ENCODE measurements at regions of chr5 and their contacts with region 1.

Region 1: GRCh38 chr5:56270568-56271392 is 37.6 kb upstream of the ANKRD55 start:
- DNase-seq: peak; percentile 89 to 92
- H3K4me3 ChIP-seq: no peak overlapping the region
- H3K4me3 Mint-ChIP-seq: no peak overlapping the region
- H3K27ac Mint-ChIP-seq: peak overlapping the region; percentile 74
- H3K4me1 ChIP-seq: peaks cover 25% of the 10 kb centered on the region
- H3K4me1 Mint-ChIP-seq: peaks cover 29% of the 10 kb centered on the region
- H3K27me3 ChIP-seq: no peaks in the 10 kb centered on the region
- H3K27me3 Mint-ChIP-seq: no peaks in the 10 kb centered on the region
- CTCF ChIP-seq: peak; percentile 99

Region 2: GRCh38 chr5:56200856-56201666 is 69.7 kb before region 1 on chr5:
- CTCF ChIA-PET with region 1: interaction called, 3 read pairs
- POLR2A ChIA-PET with region 1: no interaction called
- intact Hi-C with region 1: loop called (anchors 2 kb)
- DNase-seq: peak; percentile 84 to 85
- H3K4me3 ChIP-seq: no peak overlapping the region
- H3K4me3 Mint-ChIP-seq: no peak overlapping the region
- H3K27ac Mint-ChIP-seq: peak overlapping the region; percentile 42
- H3K4me1 ChIP-seq: peaks cover 21% of the 10 kb centered on the region
- H3K4me1 Mint-ChIP-seq: peaks cover 18% of the 10 kb centered on the region
- H3K27me3 ChIP-seq: no peaks in the 10 kb centered on the region
- H3K27me3 Mint-ChIP-seq: no peaks in the 10 kb centered on the region
- CTCF ChIP-seq: peak; percentile 73 to 93

Region 3: GRCh38 chr5:56259002-56259511 is 11.7 kb before region 1 on chr5:
- CTCF ChIA-PET with region 1: no interaction called
- POLR2A ChIA-PET with region 1: no interaction called
- intact Hi-C with region 1: no loop called
- DNase-seq: no peak
- H3K4me3 ChIP-seq: no peak overlapping the region
- H3K4me3 Mint-ChIP-seq: no peak overlapping the region
- H3K27ac Mint-ChIP-seq: no peak overlapping the region
- H3K4me1 ChIP-seq: peaks cover 4% of the 10 kb centered on the region; the same call in 1 of the 2 replicates
- H3K4me1 Mint-ChIP-seq: no peaks in the 10 kb centered on the region
- H3K27me3 ChIP-seq: no peaks in the 10 kb centered on the region
- H3K27me3 Mint-ChIP-seq: no peaks in the 10 kb centered on the region
- CTCF ChIP-seq: no peak

Region 4: DNA sequence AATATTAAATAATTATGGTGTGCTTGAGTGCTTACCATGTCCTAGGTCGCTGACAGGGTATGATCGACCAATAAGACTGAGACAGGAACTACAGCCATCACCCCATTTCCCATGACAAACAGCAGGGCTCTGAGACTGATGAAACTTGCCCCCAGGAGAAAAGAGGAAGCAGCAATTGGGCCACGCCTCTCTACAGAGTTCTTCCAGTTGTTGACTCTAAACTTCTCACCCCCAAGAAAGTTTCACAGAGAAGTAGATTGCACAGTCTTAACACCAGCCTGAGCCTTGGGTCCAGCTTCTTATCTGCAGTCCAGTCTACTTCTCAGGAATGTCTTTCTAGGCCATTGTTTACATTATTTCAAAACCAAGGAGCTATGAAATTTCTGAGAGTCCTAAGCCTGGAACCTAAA is 144.6 kb after region 1 on chr5:
- CTCF ChIA-PET with region 1: interaction called, 6 read pairs
- POLR2A ChIA-PET with region 1: no interaction called
- intact Hi-C with region 1: loop called (anchors 2 kb)
- DNase-seq: peak; percentile 82 to 90
- H3K4me3 ChIP-seq: no peak overlapping the region
- H3K4me3 Mint-ChIP-seq: peak overlapping the region; percentile 64
- H3K27ac Mint-ChIP-seq: peak overlapping the region; percentile 95
- H3K4me1 ChIP-seq: peaks cover 73% of the 10 kb centered on the region
- H3K4me1 Mint-ChIP-seq: peaks cover 45% of the 10 kb centered on the region
- H3K27me3 ChIP-seq: no peaks in the 10 kb centered on the region
- H3K27me3 Mint-ChIP-seq: no peaks in the 10 kb centered on the region
- CTCF ChIP-seq: no peak

Region 5: DNA sequence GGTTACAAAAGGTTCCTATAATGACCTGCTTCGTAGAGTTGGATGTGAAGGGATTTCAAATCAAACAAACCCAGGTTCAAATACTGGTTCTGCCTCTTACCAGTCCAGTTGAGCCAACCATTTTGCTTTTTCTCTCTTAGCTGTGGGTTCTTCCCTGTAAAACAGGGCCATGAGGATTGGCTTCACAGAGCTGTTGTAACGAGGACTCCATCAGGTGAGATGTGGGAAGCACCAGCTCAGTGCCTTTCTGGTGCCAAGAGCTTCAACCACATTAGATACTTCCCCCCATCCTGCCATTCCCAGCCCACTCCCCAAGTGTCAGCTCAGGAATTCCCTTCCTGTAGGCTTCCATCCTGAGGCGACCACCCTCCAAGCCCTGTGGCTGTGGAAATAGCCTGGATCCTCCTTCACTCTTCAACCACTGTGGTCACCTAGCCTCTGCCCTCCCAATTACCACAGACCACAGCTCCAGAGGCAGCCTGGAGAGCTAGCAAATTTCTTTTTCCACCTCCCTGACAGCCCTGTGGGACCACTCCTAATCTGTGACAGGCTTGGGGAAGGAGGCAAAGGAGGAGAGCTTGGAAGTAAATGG is 324.7 kb after region 1 on chr5:
- CTCF ChIA-PET with region 1: interaction called, 5 read pairs
- POLR2A ChIA-PET with region 1: no interaction called
- intact Hi-C with region 1: loop called (anchors 5 kb)
- DNase-seq: no peak
- H3K4me3 ChIP-seq: no peak overlapping the region
- H3K4me3 Mint-ChIP-seq: no peak overlapping the region
- H3K27ac Mint-ChIP-seq: no peak overlapping the region
- H3K4me1 ChIP-seq: no peaks in the 10 kb centered on the region
- H3K4me1 Mint-ChIP-seq: peaks cover 7% of the 10 kb centered on the region
- H3K27me3 ChIP-seq: no peaks in the 10 kb centered on the region
- H3K27me3 Mint-ChIP-seq: no peaks in the 10 kb centered on the region
- CTCF ChIP-seq: no peak

Region 6: GRCh38 chr5:56814963-56815658 is 544.3 kb after region 1 on chr5 and contains the start of gene MAP3K1:
- CTCF ChIA-PET with region 1: no interaction called
- POLR2A ChIA-PET with region 1: no interaction called
- intact Hi-C with region 1: loop called (anchors 1 kb)
- DNase-seq: peak; percentile 95 to 96
- H3K4me3 ChIP-seq: peak within 1 kb of the TSS; percentile 92
- H3K4me3 Mint-ChIP-seq: peak within 1 kb of the TSS; percentile 97
- H3K27ac Mint-ChIP-seq: peak within 1 kb of the TSS; percentile 93
- H3K4me1 ChIP-seq: peaks cover 42% of the 10 kb centered on the region
- H3K4me1 Mint-ChIP-seq: peaks cover 20% of the 10 kb centered on the region
- H3K27me3 ChIP-seq: no peaks in the 10 kb centered on the region
- H3K27me3 Mint-ChIP-seq: no peaks in the 10 kb centered on the region
- CTCF ChIP-seq: no peak
- total RNA-seq, gene MAP3K1: 46.0 and 47.0 TPM in 2 replicates

Measured in Caco-2 (cell line).